Activated CD4-positive, alpha-beta T cell treated with anti-CD3 and anti-CD28 coated beads for 36 hours (primary cell): ENCODE measurements at regions of chrX and their contacts with region 1.

Region 1: GRCh38 chrX:81377329-81377728 is 175.4 kb downstream of the SH3BGRL start:
- DNase-seq: no peak
- ATAC-seq: no peak
- H3K4me3 Mint-ChIP-seq: no peak overlapping the region
- H3K27ac Mint-ChIP-seq: no peak overlapping the region
- H3K4me1 Mint-ChIP-seq: no peaks in the 10 kb centered on the region
- H3K27me3 Mint-ChIP-seq: peaks cover 4% of the 10 kb centered on the region

Region 2: DNA sequence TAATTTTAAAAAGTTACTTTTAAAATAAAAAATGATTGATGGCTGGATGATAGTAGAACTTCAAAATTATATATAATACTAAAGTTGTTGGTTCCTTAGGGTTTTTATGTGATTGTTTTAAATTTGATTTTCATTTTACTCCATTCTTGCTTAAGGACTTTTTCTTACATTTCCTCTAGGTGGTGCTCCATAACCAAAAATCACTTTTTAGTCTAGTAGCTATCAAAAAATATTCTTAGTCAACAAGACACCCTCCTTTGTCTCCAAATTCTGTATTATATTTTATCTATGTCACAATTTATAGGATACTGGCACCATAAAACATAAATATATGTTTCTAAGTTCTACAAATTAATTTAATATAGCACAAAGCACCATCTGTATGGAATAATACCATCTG is 500.5 kb before region 1 on chrX:
- CTCF ChIA-PET with region 1: interaction called, 6 read pairs
- POLR2A ChIA-PET with region 1: no interaction called
- intact Hi-C with region 1: loop called (anchors 2 kb)
- DNase-seq: no peak
- ATAC-seq: no peak
- H3K4me3 Mint-ChIP-seq: no peak overlapping the region
- H3K27ac Mint-ChIP-seq: no peak overlapping the region
- H3K4me1 Mint-ChIP-seq: no peaks in the 10 kb centered on the region
- H3K27me3 Mint-ChIP-seq: no peaks in the 10 kb centered on the region

Region 3: GRCh38 chrX:81174286-81174685 is 203.0 kb before region 1 on chrX:
- CTCF ChIA-PET with region 1: interaction called, 7 read pairs
- POLR2A ChIA-PET with region 1: no interaction called
- intact Hi-C with region 1: loop called (anchors 1 to 2 kb)
- DNase-seq: no peak
- ATAC-seq: no peak
- H3K4me3 Mint-ChIP-seq: no peak overlapping the region
- H3K27ac Mint-ChIP-seq: no peak overlapping the region
- H3K4me1 Mint-ChIP-seq: no peaks in the 10 kb centered on the region
- H3K27me3 Mint-ChIP-seq: no peaks in the 10 kb centered on the region

Region 4: GRCh38 chrX:81662381-81662780 is 285.1 kb after region 1 on chrX:
- CTCF ChIA-PET with region 1: no interaction called
- POLR2A ChIA-PET with region 1: no interaction called
- intact Hi-C with region 1: no loop called
- DNase-seq: no peak
- ATAC-seq: no peak
- H3K4me3 Mint-ChIP-seq: no peak overlapping the region
- H3K27ac Mint-ChIP-seq: no peak overlapping the region
- H3K4me1 Mint-ChIP-seq: no peaks in the 10 kb centered on the region
- H3K27me3 Mint-ChIP-seq: no peaks in the 10 kb centered on the region